ENCODE measurements at regions of chr16 and their contacts with region 1.

Region 1: DNA sequence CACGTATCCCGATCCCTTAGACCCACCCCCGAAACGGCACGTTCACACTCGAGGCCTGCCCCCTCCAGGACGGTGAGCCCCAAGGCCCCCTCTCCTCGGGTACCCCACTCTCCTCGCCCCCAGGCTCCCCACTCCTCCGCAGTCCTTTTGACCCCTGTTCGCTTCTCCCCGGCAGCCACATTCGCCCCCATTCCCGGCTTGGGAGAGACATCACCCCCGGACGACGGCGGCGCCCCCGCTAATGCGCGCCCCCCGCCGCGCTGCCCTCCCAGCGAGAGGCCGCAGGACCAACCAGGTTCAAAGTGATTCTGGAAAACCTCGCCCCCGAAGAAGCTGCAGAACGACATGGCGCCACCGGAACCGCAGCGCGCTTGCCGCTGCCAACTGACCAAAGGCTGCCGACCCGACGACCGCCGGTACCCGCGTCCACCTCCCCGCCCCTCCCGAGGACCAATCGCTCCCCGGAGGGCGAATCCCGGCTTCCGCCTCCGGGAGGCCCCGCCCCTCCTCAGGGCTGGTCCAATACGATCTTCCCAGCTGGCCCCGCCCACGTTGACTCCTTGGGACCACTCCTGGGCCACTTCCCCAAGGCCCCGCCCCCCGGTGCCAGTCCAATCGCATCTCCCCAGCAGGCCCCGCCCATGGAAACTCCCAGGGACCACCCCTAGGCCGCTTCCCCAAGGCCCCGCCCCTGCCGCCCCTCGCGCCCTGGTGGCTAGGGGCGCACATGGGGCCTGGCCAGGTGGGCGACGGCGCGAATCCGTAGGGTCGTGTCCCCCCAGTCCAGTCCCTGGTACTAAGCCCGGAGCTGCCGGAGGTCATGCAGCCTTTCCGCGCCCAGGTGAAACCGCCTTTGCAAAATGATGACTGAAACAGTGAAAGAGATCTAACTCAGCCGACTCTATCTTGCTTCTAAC is at the start of gene MSRB1:
- DNase-seq: peak; percentile 100
- H3K4me3 Mint-ChIP-seq: peak within 1 kb of the TSS; percentile 84
- H3K27ac Mint-ChIP-seq: peak within 1 kb of the TSS; percentile 70
- H3K4me1 Mint-ChIP-seq: peaks cover 27% of the 10 kb centered on the region
- H3K27me3 Mint-ChIP-seq: no peaks in the 10 kb centered on the region
- total RNA-seq, gene MSRB1: 17.9 TPM

Region 2: DNA sequence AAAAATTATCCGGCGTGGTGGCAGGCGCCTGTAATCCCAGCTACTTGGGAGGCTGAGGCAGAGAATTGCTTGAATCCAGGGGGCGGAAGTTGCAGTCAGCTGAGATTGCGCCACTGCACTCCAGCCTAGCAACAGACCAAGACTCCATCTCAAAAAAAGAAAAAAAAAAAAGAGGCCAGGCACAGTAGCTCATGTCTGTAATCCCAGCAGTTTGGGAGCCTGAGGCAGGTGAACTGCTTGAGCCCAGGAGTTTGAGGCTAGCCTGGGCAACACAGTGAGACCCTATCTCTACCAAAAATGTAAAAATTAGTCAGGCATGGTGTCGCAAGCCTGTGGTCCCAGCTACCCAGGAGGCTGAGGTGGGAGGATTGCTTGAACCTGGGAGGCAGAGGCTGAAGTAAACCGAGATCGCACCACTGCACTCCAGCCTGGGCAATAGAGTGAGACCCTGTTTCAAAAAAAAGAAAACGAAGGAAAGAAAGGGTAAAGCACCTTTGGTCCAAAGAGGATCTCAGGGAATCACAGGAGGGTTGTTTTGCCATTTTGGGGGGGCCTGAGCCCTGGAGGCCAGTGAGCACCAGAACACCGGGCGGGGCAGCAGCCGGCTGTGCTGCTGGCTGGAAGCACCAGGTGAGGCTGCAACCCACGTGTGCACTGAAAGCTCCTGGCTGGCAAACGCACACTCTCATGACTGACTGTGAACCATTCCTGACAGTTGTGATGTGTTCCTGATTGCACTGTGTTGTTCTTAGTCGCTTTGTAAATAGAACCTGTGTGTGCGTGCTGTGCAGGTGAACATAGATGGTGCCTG is 43.2 kb before region 1 on chr16:
- CTCF ChIA-PET with region 1: no interaction called
- POLR2A ChIA-PET with region 1: no interaction called
- DNase-seq: no peak
- H3K4me3 Mint-ChIP-seq: no peak overlapping the region
- H3K27ac Mint-ChIP-seq: no peak overlapping the region
- H3K4me1 Mint-ChIP-seq: no peaks in the 10 kb centered on the region
- H3K27me3 Mint-ChIP-seq: peaks cover 4% of the 10 kb centered on the region

Region 3: GRCh38 chr16:1954209-1954912 is 11.3 kb after region 1 on chr16 and contains the start of gene RPL3L:
- CTCF ChIA-PET with region 1: interaction called, 3 read pairs
- POLR2A ChIA-PET with region 1: interaction called, 14 read pairs
- DNase-seq: no peak
- H3K4me3 Mint-ChIP-seq: no peak within 1 kb of the TSS
- H3K27ac Mint-ChIP-seq: no peak within 1 kb of the TSS
- H3K4me1 Mint-ChIP-seq: peaks cover 2% of the 10 kb centered on the region
- H3K27me3 Mint-ChIP-seq: peaks cover 3% of the 10 kb centered on the region
- total RNA-seq, gene RPL3L: not detected

Region 4: DNA sequence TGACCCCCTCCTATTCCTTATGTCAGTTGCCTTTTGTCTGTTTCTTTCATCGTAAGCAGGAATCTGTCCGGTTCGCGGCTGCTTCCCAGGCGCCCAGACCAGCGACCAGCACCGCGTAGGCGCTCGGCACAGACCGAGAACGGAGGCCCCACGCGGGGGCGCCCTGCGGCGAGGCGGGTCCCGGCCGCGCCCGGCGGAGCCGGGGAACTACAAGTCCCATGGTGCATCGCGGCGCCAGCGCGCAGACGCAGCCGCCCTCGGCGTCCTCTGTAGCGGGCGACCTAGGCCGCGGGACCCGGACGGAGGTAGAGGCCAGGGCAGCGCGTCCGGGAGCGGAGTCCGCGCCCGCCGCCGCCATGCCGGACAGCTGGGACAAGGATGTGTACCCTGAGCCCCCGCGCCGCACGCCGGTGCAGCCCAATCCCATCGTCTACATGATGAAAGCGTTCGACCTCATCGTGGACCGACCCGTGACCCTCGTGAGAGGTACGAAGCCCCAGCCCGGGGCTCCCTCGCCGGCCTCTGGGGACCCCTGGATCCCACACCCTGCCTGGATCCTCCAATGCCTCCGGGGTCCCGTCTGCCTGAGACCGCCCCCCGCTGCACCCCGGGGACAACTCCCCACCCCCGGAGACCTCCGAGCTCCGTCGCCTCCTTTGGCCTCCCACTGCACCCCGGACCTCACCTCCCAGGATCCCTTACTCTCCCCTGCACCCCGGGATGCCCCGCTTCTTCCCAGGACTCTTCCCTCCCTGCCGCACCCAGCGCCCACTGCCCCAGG is 16.4 kb after region 1 on chr16 and contains the start of gene NDUFB10:
- CTCF ChIA-PET with region 1: interaction called, 10 read pairs
- POLR2A ChIA-PET with region 1: interaction called, 32 read pairs
- DNase-seq: peak; percentile 93
- H3K4me3 Mint-ChIP-seq: peak within 1 kb of the TSS; percentile 84
- H3K27ac Mint-ChIP-seq: peak within 1 kb of the TSS; percentile 95
- H3K4me1 Mint-ChIP-seq: peaks cover 43% of the 10 kb centered on the region
- H3K27me3 Mint-ChIP-seq: peaks cover 2% of the 10 kb centered on the region
- total RNA-seq, gene NDUFB10: 131 to 138 TPM

Measured in activated CD4-positive, alpha-beta memory T cell treated with anti-CD3 and anti-CD28 coated beads, Interleukin-2, amount 10 ng/mL, durations not matched to agents 7 days and 5 days (primary cell).